ENCODE measurements at regions of chr10 and their contacts with region 1.

Region 1: GRCh38 chr10:93471110-93471651 is 11.0 kb downstream of the MYOF start:
- DNase-seq: no peak
- ATAC-seq: peak in 1 of 2 donors; percentile 52

Region 2: GRCh38 chr10:93437088-93437945 is 33.9 kb before region 1 on chr10:
- intact Hi-C with region 1: loop called in 1 of 2 experiments (anchors 2 kb)
- DNase-seq: peak; percentile 83
- ATAC-seq: peak; percentile 94 to 97

Measured in left cardiac atrium (tissue), 4 donors.